ENCODE measurements at regions of chr1 and their contacts with region 1.

Region 1: GRCh38 chr1:44594871-44595746 is 79.2 kb downstream of the TMEM53 start:
- DNase-seq: peak; percentile 68 to 81 (median 80)
- H3K4me3 ChIP-seq: no peak overlapping the region
- H3K27ac ChIP-seq: no peak overlapping the region
- H3K4me1 ChIP-seq: no peaks in the 10 kb centered on the region
- H3K27me3 ChIP-seq: peaks cover 9% of the 10 kb centered on the region
- CTCF ChIP-seq: peak; percentile 84 to 97 (median 92)
- POLR2A ChIP-seq: no peak

Region 2: GRCh38 chr1:44213222-44214112 is 381.6 kb before region 1 on chr1 and contains the start of gene DMAP1:
- intact Hi-C with region 1: loop called in 1 of 2 experiments (anchors 5 kb)
- DNase-seq: peak; percentile 80 to 94 (median 88)
- H3K4me3 ChIP-seq: peak within 1 kb of the TSS; percentile 0 to 90 (median 80)
- H3K27ac ChIP-seq: peak within 1 kb of the TSS in 3 of 5 donors; percentile 60 to 79 (median 72)
- H3K4me1 ChIP-seq: peaks cover 5 to 25% of the 10 kb centered on the region in 2 donors
- H3K27me3 ChIP-seq: no peaks in the 10 kb centered on the region
- CTCF ChIP-seq: peak in 3 of 6 experiments; percentile 23 to 31 (median 27)
- POLR2A ChIP-seq: peak; percentile 35 to 37
- total RNA-seq, gene DMAP1: 62.4 to 229 (median 73.5) TPM

Region 3: DNA sequence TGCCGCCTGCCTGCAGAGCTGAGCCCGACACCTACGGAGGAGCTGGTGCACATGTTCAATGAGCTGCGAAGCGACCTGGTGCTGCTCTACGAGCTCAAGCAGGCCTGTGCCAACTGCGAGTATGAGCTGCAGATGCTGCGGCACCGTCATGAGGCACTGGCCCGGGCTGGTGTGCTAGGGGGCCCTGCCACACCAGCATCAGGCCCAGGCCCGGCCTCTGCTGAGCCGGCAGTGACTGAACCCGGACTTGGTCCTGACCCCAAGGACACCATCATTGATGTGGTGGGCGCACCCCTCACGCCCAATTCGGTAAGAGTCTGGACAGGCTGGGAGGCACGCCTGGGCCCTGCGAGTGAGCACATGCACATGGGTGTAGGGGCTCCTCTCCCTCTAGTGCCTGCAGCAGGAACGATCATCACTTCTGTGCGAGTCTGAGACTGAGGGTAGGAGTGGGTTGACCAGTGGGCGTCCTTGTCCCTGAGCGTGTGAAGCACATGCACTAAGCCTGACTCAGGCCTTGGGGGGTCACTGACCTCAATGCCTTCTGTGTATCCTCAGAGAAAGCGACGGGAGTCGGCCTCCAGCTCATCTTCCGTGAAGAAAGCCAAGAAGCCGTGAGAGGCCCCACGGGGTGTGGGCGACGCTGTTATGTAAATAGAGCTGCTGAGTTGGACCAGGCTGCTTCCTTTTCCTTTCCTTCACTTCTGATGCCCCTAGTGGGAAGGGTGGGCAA is 374.9 kb before region 1 on chr1:
- intact Hi-C with region 1: loop called (anchors 5 to 10 kb)
- DNase-seq: peak in 5 of 7 donors; percentile 55 to 82 (median 66)
- H3K4me3 ChIP-seq: no peak overlapping the region
- H3K27ac ChIP-seq: peak overlapping the region in 1 of 5 donors; percentile 61
- H3K4me1 ChIP-seq: peaks cover 0 to 16% of the 10 kb centered on the region in 2 donors
- H3K27me3 ChIP-seq: no peaks in the 10 kb centered on the region
- CTCF ChIP-seq: peak in 1 of 6 experiments; percentile 5
- POLR2A ChIP-seq: no peak

Region 4: GRCh38 chr1:44377925-44378784 is 217.0 kb before region 1 on chr1:
- intact Hi-C with region 1: loop called (anchors 2 to 5 kb)
- DNase-seq: peak; percentile 28 to 57 (median 35)
- H3K4me3 ChIP-seq: no peak overlapping the region
- H3K27ac ChIP-seq: no peak overlapping the region
- H3K4me1 ChIP-seq: no peaks in the 10 kb centered on the region
- H3K27me3 ChIP-seq: no peaks in the 10 kb centered on the region
- CTCF ChIP-seq: peak; percentile 33 to 60 (median 57)
- POLR2A ChIP-seq: no peak

Measured in adrenal gland (tissue), 19 donors.